Activated CD4-positive, alpha-beta memory T cell treated with anti-CD3 and anti-CD28 coated beads for 36 hours (primary cell): ENCODE measurements at regions of chr6 and their contacts with region 1.

Region 1: DNA sequence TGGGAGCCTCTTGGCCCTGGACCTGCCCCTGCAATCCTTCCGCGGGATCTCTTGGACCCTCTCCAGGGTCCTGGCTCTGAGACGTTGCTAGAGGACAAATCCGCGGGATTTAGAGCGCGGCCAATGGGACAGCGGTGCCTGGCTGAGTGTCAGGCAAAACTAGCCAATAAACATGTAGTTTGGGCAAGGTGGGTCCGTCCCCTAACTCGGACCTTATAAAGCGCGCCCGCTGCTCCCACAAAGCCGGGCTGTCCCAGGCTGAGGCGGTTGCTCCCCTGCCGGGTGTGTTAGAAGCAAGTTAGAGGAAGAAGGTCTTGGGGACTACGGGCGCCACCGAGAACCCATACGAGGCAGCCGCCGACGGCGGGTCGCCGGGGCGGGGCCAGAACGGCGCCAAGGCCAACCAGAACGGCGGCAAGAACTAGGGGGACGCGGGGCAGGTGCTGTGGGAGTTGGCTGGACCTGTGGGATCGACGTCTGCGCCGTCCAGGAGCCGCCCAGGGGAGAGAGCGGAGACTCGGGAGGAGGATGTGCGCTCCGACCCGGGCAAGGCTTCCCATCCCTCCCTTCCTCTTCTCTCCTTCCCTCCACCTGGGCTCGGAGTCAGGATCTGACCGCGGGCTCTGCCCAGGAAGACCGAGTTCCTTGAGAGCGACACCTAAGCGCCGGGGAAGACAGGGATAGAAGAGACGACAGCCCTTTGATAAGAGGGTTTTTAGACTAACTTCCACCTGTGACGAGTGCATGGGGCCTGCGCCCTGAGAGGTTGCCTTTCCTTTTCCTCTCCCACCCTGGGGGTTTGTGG is 6.5 kb upstream of the TMEM14A start:
- DNase-seq: peak; percentile 84
- H3K4me3 Mint-ChIP-seq: no peak overlapping the region
- H3K27ac Mint-ChIP-seq: no peak overlapping the region
- H3K4me1 Mint-ChIP-seq: peaks cover 8% of the 10 kb centered on the region
- H3K27me3 Mint-ChIP-seq: no peaks in the 10 kb centered on the region

Region 2: GRCh38 chr6:52482903-52483670 is 181.3 kb before region 1 on chr6:
- CTCF ChIA-PET with region 1: no interaction called
- POLR2A ChIA-PET with region 1: no interaction called
- intact Hi-C with region 1: no loop called
- DNase-seq: no peak
- H3K4me3 Mint-ChIP-seq: no peak overlapping the region
- H3K27ac Mint-ChIP-seq: no peak overlapping the region
- H3K4me1 Mint-ChIP-seq: no peaks in the 10 kb centered on the region
- H3K27me3 Mint-ChIP-seq: no peaks in the 10 kb centered on the region

Region 3: GRCh38 chr6:52517502-52518278 is 146.7 kb before region 1 on chr6:
- CTCF ChIA-PET with region 1: no interaction called
- POLR2A ChIA-PET with region 1: no interaction called
- intact Hi-C with region 1: loop called (anchors 10 kb)
- DNase-seq: peak; percentile 73
- H3K4me3 Mint-ChIP-seq: no peak overlapping the region
- H3K27ac Mint-ChIP-seq: no peak overlapping the region
- H3K4me1 Mint-ChIP-seq: peaks cover 6% of the 10 kb centered on the region
- H3K27me3 Mint-ChIP-seq: no peaks in the 10 kb centered on the region

Region 4: GRCh38 chr6:52598123-52598823 is 66.1 kb before region 1 on chr6:
- CTCF ChIA-PET with region 1: interaction called, 3 read pairs
- POLR2A ChIA-PET with region 1: no interaction called
- intact Hi-C with region 1: loop called (anchors 2 kb)
- DNase-seq: peak; percentile 40
- H3K4me3 Mint-ChIP-seq: no peak overlapping the region
- H3K27ac Mint-ChIP-seq: no peak overlapping the region
- H3K4me1 Mint-ChIP-seq: peaks cover 13% of the 10 kb centered on the region
- H3K27me3 Mint-ChIP-seq: peaks cover 5% of the 10 kb centered on the region

Region 5: GRCh38 chr6:52610745-52611355 is 53.5 kb before region 1 on chr6:
- CTCF ChIA-PET with region 1: no interaction called
- POLR2A ChIA-PET with region 1: no interaction called
- intact Hi-C with region 1: no loop called
- DNase-seq: no peak
- H3K4me3 Mint-ChIP-seq: no peak overlapping the region
- H3K27ac Mint-ChIP-seq: no peak overlapping the region
- H3K4me1 Mint-ChIP-seq: no peaks in the 10 kb centered on the region
- H3K27me3 Mint-ChIP-seq: peaks cover 13% of the 10 kb centered on the region

Region 6: DNA sequence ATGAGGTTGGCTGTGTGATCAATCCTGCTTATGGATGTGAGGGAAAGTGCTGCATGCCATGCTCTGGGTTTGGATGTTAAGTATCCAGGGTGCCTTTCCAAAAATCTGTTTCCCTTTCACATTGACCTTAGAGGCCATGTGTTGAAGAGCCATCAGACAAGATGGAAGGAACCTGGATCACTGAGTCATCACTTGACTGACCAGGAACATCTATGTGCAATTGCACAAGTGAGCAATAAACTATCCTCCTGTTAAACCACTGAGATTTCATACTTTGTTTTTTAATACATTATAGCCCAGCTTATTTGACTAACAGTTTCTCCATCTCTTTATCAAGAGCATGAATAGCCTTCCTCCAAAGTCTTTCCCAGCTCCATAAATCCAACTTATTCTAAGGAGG is 11.2 kb before region 1 on chr6:
- CTCF ChIA-PET with region 1: interaction called, 73 read pairs
- POLR2A ChIA-PET with region 1: no interaction called
- intact Hi-C with region 1: loop called (anchors 1 kb)
- DNase-seq: no peak
- H3K4me3 Mint-ChIP-seq: no peak overlapping the region
- H3K27ac Mint-ChIP-seq: no peak overlapping the region
- H3K4me1 Mint-ChIP-seq: peaks cover 3% of the 10 kb centered on the region
- H3K27me3 Mint-ChIP-seq: peaks cover 2% of the 10 kb centered on the region